ENCODE measurements at regions of chr5 and their contacts with region 1.

Region 1: DNA sequence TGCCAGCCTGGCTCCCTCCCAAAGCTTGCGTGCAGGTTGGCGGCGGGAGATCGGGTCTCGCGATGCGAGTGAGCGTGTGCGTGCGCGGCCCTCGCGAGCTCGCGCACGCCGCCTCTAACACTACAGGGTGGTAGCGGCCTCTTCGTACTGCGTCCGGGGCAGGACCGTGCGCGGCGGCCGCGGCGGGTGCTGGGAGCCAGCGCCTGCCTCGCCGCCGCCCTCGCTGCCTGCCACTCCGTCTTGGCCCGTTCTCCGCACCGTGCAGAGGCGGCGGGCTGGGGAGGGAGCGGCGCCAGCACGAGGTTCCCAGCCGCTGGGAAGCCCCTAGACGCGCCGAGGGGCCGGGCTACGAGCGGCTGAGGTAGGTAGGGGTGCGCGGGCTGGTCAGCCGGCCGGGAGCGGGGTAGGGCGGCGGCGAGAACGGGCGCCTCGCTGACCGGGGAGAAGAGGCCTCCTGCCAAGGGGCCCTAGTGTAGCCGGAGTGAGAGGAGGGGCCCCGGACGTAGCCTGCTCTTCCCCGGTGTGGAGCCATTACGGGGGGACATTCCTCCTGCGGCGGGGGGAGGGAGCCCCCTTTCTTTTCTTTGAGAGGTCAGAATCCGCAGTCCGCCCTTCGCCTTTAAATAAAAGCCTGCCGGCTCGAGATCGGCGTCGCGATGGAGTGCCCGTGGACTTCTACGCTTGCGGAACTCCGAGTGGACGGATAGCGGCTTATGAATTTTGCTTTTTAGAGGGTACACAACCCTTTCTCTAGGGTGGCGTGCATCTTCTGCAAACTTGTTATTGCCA is at the start of gene C5orf24:
- DNase-seq: peak; percentile 96
- ATAC-seq: peak; percentile 95
- H3K4me3 Mint-ChIP-seq: peak within 1 kb of the TSS; percentile 95
- H3K27ac Mint-ChIP-seq: peak within 1 kb of the TSS; percentile 97
- H3K4me1 Mint-ChIP-seq: peaks cover 29% of the 10 kb centered on the region
- H3K27me3 Mint-ChIP-seq: no peaks in the 10 kb centered on the region
- total RNA-seq, gene C5orf24: 24.5 to 24.9 TPM

Region 2: DNA sequence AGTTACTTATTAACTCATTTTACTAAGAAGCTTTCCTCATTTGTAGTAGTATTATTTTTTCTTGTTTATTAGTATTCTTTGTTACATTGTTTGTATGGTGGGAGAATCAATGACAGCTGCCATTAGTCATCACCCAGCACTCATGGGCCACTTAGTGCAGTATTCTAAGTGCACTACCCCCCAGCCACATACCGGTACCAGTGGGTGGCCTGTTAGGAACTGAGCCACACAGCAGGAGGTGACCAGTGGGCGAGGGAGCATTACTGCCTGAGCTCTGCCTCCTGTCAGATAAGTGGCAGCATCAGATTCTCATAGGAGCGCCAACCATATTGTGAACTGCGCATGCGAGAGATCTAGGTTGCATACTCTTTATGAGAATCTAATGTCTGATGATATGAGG is 131.9 kb before region 1 on chr5:
- CTCF ChIA-PET with region 1: no interaction called
- POLR2A ChIA-PET with region 1: no interaction called
- intact Hi-C with region 1: no loop called
- DNase-seq: no peak
- ATAC-seq: no peak
- H3K4me3 Mint-ChIP-seq: no peak overlapping the region
- H3K27ac Mint-ChIP-seq: no peak overlapping the region
- H3K4me1 Mint-ChIP-seq: no peaks in the 10 kb centered on the region
- H3K27me3 Mint-ChIP-seq: no peaks in the 10 kb centered on the region

Region 3: GRCh38 chr5:134833340-134834032 is 12.6 kb before region 1 on chr5:
- CTCF ChIA-PET with region 1: interaction called, 10 read pairs
- POLR2A ChIA-PET with region 1: interaction called, 3 read pairs
- intact Hi-C with region 1: no loop called
- DNase-seq: no peak
- ATAC-seq: no peak
- H3K4me3 Mint-ChIP-seq: no peak overlapping the region
- H3K27ac Mint-ChIP-seq: no peak overlapping the region
- H3K4me1 Mint-ChIP-seq: no peaks in the 10 kb centered on the region
- H3K27me3 Mint-ChIP-seq: no peaks in the 10 kb centered on the region

Region 4: GRCh38 chr5:134873987-134874830 is 28.2 kb after region 1 on chr5 and contains the start of gene TXNDC15:
- CTCF ChIA-PET with region 1: interaction called, 3 read pairs
- POLR2A ChIA-PET with region 1: interaction called, 6 read pairs
- intact Hi-C with region 1: loop called (anchors 1 to 2 kb)
- DNase-seq: peak; percentile 90
- ATAC-seq: peak; percentile 83
- H3K4me3 Mint-ChIP-seq: peak within 1 kb of the TSS; percentile 88
- H3K27ac Mint-ChIP-seq: peak within 1 kb of the TSS; percentile 97
- H3K4me1 Mint-ChIP-seq: peaks cover 37% of the 10 kb centered on the region
- H3K27me3 Mint-ChIP-seq: no peaks in the 10 kb centered on the region
- total RNA-seq, gene TXNDC15: 16.6 to 29.1 TPM

Measured in activated CD4-positive, alpha-beta T cell treated with anti-CD3 and anti-CD28 coated beads for 36 hours (primary cell).